ENCODE measurements at regions of chr5 and their contacts with region 1.

Region 1: DNA sequence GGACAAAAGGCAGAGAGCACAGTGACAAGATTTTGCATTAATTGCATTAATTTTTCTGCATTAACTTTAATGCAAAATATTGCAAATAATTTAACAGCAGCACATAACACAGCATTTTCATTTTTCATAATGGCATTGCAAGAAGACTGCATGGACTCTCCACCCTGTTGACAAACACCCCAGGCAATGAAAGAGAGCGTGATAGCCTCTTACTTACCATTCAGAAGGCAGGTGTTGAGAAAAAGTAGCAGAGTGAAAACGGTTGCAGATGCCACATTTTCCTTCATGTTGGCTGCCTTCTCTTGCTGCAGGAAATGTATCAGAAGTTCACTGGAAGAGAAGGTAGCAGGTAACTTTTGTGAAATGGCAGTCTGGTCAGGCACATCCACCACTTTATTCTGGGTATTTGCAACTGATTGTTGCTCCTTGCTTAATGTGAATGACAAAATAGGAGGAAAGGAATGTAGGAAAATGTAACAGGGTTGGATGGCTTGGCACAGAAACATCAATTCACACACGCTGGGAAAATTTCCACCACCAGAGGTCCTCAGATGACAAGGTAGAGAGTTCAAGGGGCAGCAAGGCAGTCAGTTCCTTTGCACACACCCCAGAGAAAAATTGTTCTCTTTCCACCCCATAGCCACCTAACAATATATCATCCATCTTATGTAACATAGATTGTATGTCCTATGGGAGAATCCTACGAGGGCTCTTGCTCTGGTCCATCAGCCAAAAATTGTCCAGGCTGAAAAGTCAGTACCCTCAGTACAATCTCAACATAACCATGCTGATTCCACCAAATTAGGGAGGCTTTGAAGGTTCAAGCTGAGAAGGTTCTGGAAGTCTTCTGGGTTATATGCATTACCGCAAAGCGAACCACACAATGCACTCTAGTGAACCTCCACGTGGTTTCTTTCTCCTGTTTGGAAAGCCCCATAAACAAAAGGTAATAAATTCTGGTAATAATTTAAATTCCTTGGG is 41.9 kb upstream of the AGXT2 start:
- DNase-seq: peak; percentile 73
- ATAC-seq: no peak
- H3K4me3 Mint-ChIP-seq: no peak overlapping the region
- H3K27ac Mint-ChIP-seq: no peak overlapping the region
- H3K4me1 Mint-ChIP-seq: peaks cover 3% of the 10 kb centered on the region
- H3K27me3 Mint-ChIP-seq: peaks cover 10% of the 10 kb centered on the region

Region 2: GRCh38 chr5:34977934-34978613 is 111.5 kb before region 1 on chr5:
- CTCF ChIA-PET with region 1: no interaction called
- POLR2A ChIA-PET with region 1: no interaction called
- intact Hi-C with region 1: no loop called
- DNase-seq: no peak
- ATAC-seq: no peak
- H3K4me3 Mint-ChIP-seq: no peak overlapping the region
- H3K27ac Mint-ChIP-seq: no peak overlapping the region
- H3K4me1 Mint-ChIP-seq: no peaks in the 10 kb centered on the region
- H3K27me3 Mint-ChIP-seq: peaks cover 8% of the 10 kb centered on the region

Region 3: GRCh38 chr5:35182541-35183535 is 93.2 kb after region 1 on chr5:
- CTCF ChIA-PET with region 1: interaction called, 5 read pairs
- POLR2A ChIA-PET with region 1: no interaction called
- intact Hi-C with region 1: loop called (anchors 1 to 2 kb)
- DNase-seq: peak; percentile 67
- ATAC-seq: peak; percentile 70
- H3K4me3 Mint-ChIP-seq: no peak overlapping the region
- H3K27ac Mint-ChIP-seq: no peak overlapping the region
- H3K4me1 Mint-ChIP-seq: no peaks in the 10 kb centered on the region
- H3K27me3 Mint-ChIP-seq: peaks cover 9% of the 10 kb centered on the region

Region 4: GRCh38 chr5:35202319-35203111 is 112.9 kb after region 1 on chr5:
- CTCF ChIA-PET with region 1: interaction called, 3 read pairs
- POLR2A ChIA-PET with region 1: no interaction called
- intact Hi-C with region 1: loop called (anchors 1 kb)
- DNase-seq: peak; percentile 71
- ATAC-seq: peak; percentile 74
- H3K4me3 Mint-ChIP-seq: no peak overlapping the region
- H3K27ac Mint-ChIP-seq: no peak overlapping the region
- H3K4me1 Mint-ChIP-seq: no peaks in the 10 kb centered on the region
- H3K27me3 Mint-ChIP-seq: peaks cover 29% of the 10 kb centered on the region

Region 5: DNA sequence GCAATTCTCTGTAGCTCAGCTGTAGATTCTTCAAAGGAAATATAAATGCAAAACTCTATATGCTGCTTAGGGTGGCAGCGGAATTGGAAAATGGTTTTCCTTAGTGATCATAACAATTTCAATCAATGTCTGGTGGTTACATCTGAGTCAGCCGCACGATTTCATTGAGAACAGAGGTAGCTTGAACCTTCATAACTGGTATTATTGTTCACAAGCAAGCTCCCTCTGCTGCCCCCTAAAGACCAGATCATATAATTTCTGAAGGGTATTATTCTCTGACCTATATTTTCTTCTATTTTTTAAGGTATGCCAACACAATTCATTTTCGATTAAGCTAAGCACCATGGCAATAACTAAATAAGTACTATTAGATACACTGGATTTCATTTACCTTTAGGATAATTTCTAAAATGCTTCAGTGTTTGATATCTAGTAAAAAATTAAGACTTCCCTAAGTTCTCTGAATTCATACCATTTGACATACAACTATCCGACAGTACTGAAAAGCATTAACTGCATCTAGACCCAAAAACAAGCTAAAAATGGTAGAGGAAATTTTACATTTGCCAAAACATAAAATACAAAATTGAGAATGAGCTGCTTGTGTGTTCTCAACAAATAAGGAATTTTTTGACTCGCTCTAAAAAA is 346.9 kb after region 1 on chr5:
- CTCF ChIA-PET with region 1: interaction called, 5 read pairs
- POLR2A ChIA-PET with region 1: no interaction called
- intact Hi-C with region 1: loop called in 1 of 2 experiments (anchors 2 kb)
- DNase-seq: peak; percentile 10
- ATAC-seq: peak; percentile 44
- H3K4me3 Mint-ChIP-seq: no peak overlapping the region
- H3K27ac Mint-ChIP-seq: no peak overlapping the region
- H3K4me1 Mint-ChIP-seq: no peaks in the 10 kb centered on the region
- H3K27me3 Mint-ChIP-seq: peaks cover 46% of the 10 kb centered on the region

Measured in activated CD4-positive, alpha-beta T cell treated with anti-CD3 and anti-CD28 coated beads for 36 hours (primary cell).